GM12878 (cell line): ENCODE measurements at regions of chr5 and their contacts with region 1.

Region 1: GRCh38 chr5:54580997-54581811 is 63.6 kb downstream of the SNX18 start:
- DNase-seq: no peak
- ATAC-seq: no peak
- H3K4me3 ChIP-seq: no peak overlapping the region
- H3K27ac ChIP-seq: no peak overlapping the region
- H3K4me1 ChIP-seq: no peaks in the 10 kb centered on the region
- H3K27me3 ChIP-seq: peaks cover 1 to 2% of the 10 kb centered on the region in 2 experiments; a peak in 1 of 4 replicates
- CTCF ChIP-seq: no peak
- EP300 ChIP-seq: no peak
- POLR2A ChIP-seq: no peak
- RAD21 ChIP-seq: no peak

Region 2: GRCh38 chr5:54630738-54631359 is 49.6 kb after region 1 on chr5:
- CTCF ChIA-PET with region 1: no interaction called
- POLR2A ChIA-PET with region 1: no interaction called
- RAD21 ChIA-PET with region 1: no interaction called
- SMC1A ChIA-PET with region 1: no interaction called
- in situ Hi-C with region 1: no loop called
- intact Hi-C with region 1: no loop called
- DNase-seq: no peak
- ATAC-seq: no peak
- H3K4me3 ChIP-seq: no peak overlapping the region
- H3K27ac ChIP-seq: no peak overlapping the region
- H3K4me1 ChIP-seq: no peaks in the 10 kb centered on the region
- H3K27me3 ChIP-seq: no peaks in the 10 kb centered on the region; a peak in 2 of 4 replicates
- CTCF ChIP-seq: no peak
- EP300 ChIP-seq: no peak
- POLR2A ChIP-seq: no peak
- RAD21 ChIP-seq: no peak

Region 3: DNA sequence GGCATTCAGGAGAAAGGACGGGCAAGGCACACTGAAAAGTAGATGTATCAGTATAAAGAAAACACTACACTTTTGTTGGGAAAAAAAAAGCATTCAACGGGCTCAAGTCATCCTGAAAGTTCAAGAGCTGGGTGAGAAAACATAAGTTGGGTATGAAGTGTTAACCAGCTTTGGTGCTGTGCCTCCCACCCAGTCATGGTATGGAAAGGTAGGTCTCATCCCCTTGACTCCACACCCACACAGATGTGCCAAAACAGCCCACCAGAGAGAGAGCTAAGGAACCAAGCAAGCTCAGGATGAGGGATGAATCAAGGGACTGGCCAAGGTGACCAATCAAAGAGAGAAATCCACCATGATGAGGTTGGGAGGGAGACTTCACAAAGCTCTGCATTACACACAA is 349.5 kb after region 1 on chr5:
- CTCF ChIA-PET with region 1: no interaction called
- POLR2A ChIA-PET with region 1: interaction called, 14 read pairs
- RAD21 ChIA-PET with region 1: no interaction called
- SMC1A ChIA-PET with region 1: no interaction called
- in situ Hi-C with region 1: no loop called
- intact Hi-C with region 1: no loop called
- DNase-seq: no peak
- ATAC-seq: no peak
- H3K4me3 ChIP-seq: no peak overlapping the region
- H3K27ac ChIP-seq: no peak overlapping the region
- H3K4me1 ChIP-seq: no peaks in the 10 kb centered on the region
- H3K27me3 ChIP-seq: no peaks in the 10 kb centered on the region; a peak in 1 of 4 replicates
- CTCF ChIP-seq: no peak
- EP300 ChIP-seq: no peak
- POLR2A ChIP-seq: no peak
- RAD21 ChIP-seq: no peak